Activated CD4-positive, alpha-beta memory T cell treated with anti-CD3 and anti-CD28 coated beads for 36 hours (primary cell): ENCODE measurements at regions of chr9 and their contacts with region 1.

Region 1: DNA sequence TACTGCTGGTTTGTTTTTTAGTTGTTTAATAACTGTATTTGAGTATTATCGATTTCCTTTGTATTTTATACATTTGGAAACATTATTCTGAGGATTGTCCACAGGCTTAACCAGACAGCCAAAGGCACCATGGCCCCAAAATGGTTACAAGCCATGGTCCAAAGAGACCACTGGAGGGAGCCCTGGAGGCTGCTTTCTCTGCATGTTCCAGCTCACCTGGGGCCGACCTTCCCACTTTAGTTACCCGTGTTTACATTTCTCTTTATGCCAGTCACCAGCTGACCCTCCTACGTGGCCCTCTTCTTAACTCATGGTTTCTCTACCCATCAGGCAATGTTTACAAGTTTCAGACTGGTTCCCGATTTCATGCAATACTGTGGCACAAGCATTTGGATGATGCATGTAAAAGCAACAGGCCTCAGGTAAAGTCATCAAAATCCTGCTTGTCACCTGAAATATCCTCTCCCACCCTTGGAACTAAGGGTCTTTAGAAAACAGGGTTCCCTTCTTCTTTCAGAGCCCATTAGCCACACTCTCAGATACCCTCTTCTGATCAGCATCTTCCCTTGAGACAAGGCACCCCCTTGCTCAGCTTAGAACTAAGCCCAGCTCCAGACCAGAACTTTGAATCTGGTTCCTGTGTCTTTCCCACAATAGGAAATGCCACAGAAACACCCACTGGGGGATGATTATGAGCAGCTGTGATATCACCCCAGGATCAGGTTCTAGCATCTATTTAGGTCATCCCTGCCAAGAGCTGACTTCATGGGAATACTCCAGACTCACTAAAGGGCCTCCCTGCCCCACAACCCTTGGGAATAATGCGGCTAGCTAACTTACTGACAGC is 49.9 kb upstream of the GARNL3 start:
- DNase-seq: peak; percentile 74
- H3K4me3 Mint-ChIP-seq: no peak overlapping the region
- H3K27ac Mint-ChIP-seq: no peak overlapping the region
- H3K4me1 Mint-ChIP-seq: peaks cover 4% of the 10 kb centered on the region
- H3K27me3 Mint-ChIP-seq: no peaks in the 10 kb centered on the region

Region 2: DNA sequence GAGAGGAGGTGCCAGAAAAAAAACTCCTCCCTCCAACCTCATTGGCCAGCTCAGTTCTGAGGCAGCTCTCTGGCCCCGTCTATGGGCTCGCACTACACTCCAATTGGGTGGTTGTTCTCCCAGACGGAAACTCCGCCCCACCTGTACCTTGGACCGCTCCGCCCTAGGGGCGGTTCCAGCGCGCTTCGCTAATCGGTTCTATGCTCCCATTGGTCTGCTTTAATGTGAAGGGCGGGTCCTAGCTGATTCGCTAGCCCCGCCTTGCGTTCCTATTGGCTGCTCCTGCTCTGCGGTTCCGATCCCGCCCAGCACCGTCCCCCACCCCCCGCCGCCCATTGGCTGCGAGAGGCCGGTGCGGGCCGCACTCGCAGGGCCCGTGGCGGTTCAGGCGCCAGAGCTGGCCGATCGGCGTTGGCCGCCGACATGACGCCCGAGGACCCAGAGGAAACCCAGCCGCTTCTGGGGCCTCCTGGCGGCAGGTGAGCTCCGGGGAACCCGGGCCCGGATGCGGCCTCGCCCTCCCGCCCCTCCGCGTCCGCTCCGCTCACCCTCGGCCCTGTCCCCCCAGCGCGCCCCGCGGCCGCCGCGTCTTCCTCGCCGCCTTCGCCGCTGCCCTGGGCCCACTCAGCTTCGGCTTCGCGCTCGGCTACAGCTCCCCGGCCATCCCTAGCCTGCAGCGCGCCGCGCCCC is 182.3 kb after region 1 on chr9 and contains the start of gene SLC2A8:
- CTCF ChIA-PET with region 1: interaction called, 17 read pairs
- POLR2A ChIA-PET with region 1: no interaction called
- intact Hi-C with region 1: loop called (anchors 1 kb)
- DNase-seq: peak; percentile 97
- H3K4me3 Mint-ChIP-seq: peak within 1 kb of the TSS; percentile 60
- H3K27ac Mint-ChIP-seq: no peak within 1 kb of the TSS
- H3K4me1 Mint-ChIP-seq: peaks cover 16% of the 10 kb centered on the region
- H3K27me3 Mint-ChIP-seq: peaks cover 57% of the 10 kb centered on the region
- total RNA-seq, gene SLC2A8: 3.2 to 4.6 TPM